ENCODE measurements at regions of chr12 and their contacts with region 1.

Region 1: GRCh38 chr12:2688381-2688931 is 106.3 kb upstream of the FKBP4 start:
- DNase-seq: no peak
- H3K4me3 ChIP-seq: no peak overlapping the region
- H3K27ac ChIP-seq: no peak overlapping the region
- H3K4me1 ChIP-seq: peaks cover 0 to 40% (median 26%) of the 10 kb centered on the region in 6 donors
- H3K27me3 ChIP-seq: peaks cover 0 to 10% (median 0%) of the 10 kb centered on the region in 7 donors
- CTCF ChIP-seq: no peak
- POLR2A ChIP-seq: no peak

Region 2: DNA sequence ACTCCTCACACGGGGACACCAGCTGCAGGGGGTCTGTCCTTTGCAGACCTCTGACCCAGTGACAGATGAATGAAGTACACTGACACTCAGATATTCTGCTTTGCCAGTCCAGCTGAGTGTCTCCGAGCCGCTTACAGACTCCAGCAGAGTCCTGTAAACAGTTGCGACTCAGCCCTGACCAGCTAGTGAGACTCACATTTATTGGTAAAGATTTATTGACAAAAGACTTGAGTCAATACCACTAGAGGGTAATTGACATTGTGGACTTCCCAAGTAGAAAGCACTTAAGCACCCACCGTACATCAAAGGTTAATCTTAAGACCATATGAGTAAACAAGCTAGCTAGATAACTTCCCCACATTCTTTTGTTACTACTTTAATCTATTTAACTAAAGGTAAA is 96.6 kb after region 1 on chr12:
- intact Hi-C with region 1: loop called (anchors 5 kb)
- DNase-seq: no peak
- H3K4me3 ChIP-seq: no peak overlapping the region
- H3K27ac ChIP-seq: no peak overlapping the region
- H3K4me1 ChIP-seq: peaks cover 5 to 12% (median 10%) of the 10 kb centered on the region in 6 donors
- H3K27me3 ChIP-seq: peaks cover 0 to 29% (median 7%) of the 10 kb centered on the region in 7 donors
- CTCF ChIP-seq: no peak
- POLR2A ChIP-seq: no peak

Region 3: DNA sequence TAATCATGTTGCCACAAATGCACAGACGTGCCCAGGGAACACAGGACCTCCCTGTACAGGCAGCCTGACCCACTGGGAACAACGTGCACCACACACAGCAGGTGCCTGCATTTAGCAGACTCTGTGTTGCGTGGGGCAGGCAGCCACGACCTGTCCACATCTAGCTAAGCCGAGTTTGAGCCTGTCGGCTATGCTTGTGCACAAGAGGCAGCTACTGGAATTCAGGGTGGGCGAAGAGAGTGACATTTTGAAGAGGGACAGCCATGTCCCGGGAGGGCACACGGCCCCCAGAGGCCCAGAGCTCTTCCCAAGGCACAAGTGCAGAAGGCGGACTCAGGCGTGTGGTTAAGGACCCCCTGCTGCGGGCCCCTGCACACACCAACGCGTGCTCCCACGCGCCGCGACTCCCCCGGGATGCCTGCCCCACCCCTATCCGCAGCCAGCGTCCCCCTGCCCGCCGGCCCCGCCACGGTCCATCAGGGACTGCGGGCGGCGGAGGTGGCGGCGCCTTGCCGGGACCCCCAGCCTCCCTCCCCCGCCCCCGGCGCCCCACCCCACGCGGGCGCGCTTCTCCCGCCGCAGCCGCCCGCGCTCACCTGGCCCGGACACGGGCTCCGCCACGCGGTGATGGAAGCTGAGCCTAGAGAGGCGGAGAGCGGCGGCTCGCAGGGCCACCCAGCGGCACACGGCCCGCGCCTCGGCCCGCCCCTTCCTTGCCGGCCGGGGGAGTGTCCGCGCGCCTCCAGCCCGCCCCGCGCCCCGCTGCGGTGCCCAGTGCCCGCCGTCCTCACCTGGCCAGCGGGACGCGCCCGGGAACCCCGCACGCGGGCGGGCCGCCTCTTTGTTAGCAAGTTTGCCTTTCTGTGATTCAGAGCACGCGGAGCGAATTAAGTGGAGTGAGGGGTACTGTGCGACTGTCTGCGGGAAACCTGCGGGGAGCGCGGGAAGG is 677.3 kb after region 1 on chr12:
- intact Hi-C with region 1: no loop called
- DNase-seq: no peak
- H3K4me3 ChIP-seq: peak overlapping the region in 6 of 8 donors; percentile 13 to 56 (median 24)
- H3K27ac ChIP-seq: no peak overlapping the region
- H3K4me1 ChIP-seq: peaks cover 0 to 11% (median 7%) of the 10 kb centered on the region in 6 donors
- H3K27me3 ChIP-seq: peaks cover 0 to 91% (median 28%) of the 10 kb centered on the region in 7 donors
- CTCF ChIP-seq: no peak
- POLR2A ChIP-seq: no peak

Measured in spleen (tissue), 13 donors.